Esophagus muscularis mucosa (tissue), 4 donors: ENCODE measurements at regions of chr3 and their contacts with region 1.

Region 1: GRCh38 chr3:42118762-42119361 is 27.7 kb downstream of the TRAK1 start:
- DNase-seq: no peak
- H3K4me3 ChIP-seq: no peak overlapping the region
- H3K27ac ChIP-seq: peak overlapping the region in 3 of 4 donors; percentile 22 to 31 (median 28)
- H3K4me1 ChIP-seq: peaks cover 81 to 90% (median 82%) of the 10 kb centered on the region in 4 donors
- H3K27me3 ChIP-seq: no peaks in the 10 kb centered on the region
- CTCF ChIP-seq: no peak
- EP300 ChIP-seq: no peak
- POLR2A ChIP-seq: no peak

Region 2: GRCh38 chr3:42190701-42191462 is 72.0 kb after region 1 on chr3:
- intact Hi-C with region 1: loop called (anchors 5 kb)
- DNase-seq: no peak
- H3K4me3 ChIP-seq: no peak overlapping the region
- H3K27ac ChIP-seq: peak overlapping the region in 3 of 4 donors; percentile 10 to 36 (median 25)
- H3K4me1 ChIP-seq: peaks cover 27 to 50% (median 34%) of the 10 kb centered on the region in 4 donors
- H3K27me3 ChIP-seq: no peaks in the 10 kb centered on the region
- CTCF ChIP-seq: peak; percentile 69 to 87 (median 87)
- EP300 ChIP-seq: no peak
- POLR2A ChIP-seq: no peak